Activated T-helper 2 cell treated with anti-CD3 and anti-CD28 coated beads, Interferon-gamma antibody, Interleukin-2, Interleukin-4, amounts not matched to agents 10 μg/mL and 5 μg/mL and 100 μg/mL, durations not matched to agents 14 hours and 24 hours and 36 hours (primary cell): ENCODE measurements at regions of chr13 and their contacts with region 1.

Region 1: GRCh38 chr13:75326173-75327134 is 155.5 kb downstream of the TBC1D4 start:
- DNase-seq: peak; percentile 56
- H3K4me3 Mint-ChIP-seq: peak overlapping the region; percentile 86
- H3K27ac Mint-ChIP-seq: peak overlapping the region; percentile 95
- H3K4me1 Mint-ChIP-seq: peaks cover 54% of the 10 kb centered on the region
- H3K27me3 Mint-ChIP-seq: no peaks in the 10 kb centered on the region

Region 2: DNA sequence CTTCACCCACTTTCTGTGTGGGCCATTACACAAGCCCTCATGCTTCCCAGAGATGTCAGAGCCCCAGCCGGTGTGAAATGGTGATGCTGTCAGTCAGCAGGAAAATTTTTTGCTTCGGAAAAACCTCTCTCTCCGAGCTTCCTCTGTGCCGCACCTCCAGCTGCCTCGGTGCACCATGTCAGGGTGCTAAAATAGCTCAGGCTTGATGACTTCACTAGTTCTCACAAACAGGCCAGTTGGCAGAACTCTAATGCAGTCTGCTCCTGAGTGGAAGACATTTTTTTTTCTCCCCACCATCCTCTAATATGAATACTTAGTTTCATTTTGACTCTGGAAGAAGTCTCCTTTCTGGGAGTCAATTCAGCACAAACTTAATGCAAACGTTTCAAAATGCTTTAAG is 1263.5 kb before region 1 on chr13:
- intact Hi-C with region 1: loop called (anchors 10 kb)
- DNase-seq: no peak
- H3K4me3 Mint-ChIP-seq: peak overlapping the region; percentile 79
- H3K27ac Mint-ChIP-seq: peak overlapping the region; percentile 93
- H3K4me1 Mint-ChIP-seq: peaks cover 64% of the 10 kb centered on the region
- H3K27me3 Mint-ChIP-seq: no peaks in the 10 kb centered on the region

Region 3: GRCh38 chr13:75294110-75294509 is 32.3 kb before region 1 on chr13:
- intact Hi-C with region 1: loop called (anchors 5 kb)
- DNase-seq: no peak
- H3K4me3 Mint-ChIP-seq: no peak overlapping the region
- H3K27ac Mint-ChIP-seq: no peak overlapping the region
- H3K4me1 Mint-ChIP-seq: peaks cover 40% of the 10 kb centered on the region
- H3K27me3 Mint-ChIP-seq: no peaks in the 10 kb centered on the region

Region 4: GRCh38 chr13:75365724-75366173 is 39.3 kb after region 1 on chr13:
- intact Hi-C with region 1: loop called (anchors 1 kb)
- DNase-seq: peak; percentile 22
- H3K4me3 Mint-ChIP-seq: peak overlapping the region; percentile 59
- H3K27ac Mint-ChIP-seq: peak overlapping the region; percentile 95
- H3K4me1 Mint-ChIP-seq: peaks cover 46% of the 10 kb centered on the region
- H3K27me3 Mint-ChIP-seq: no peaks in the 10 kb centered on the region

Region 5: GRCh38 chr13:75549262-75550158 is 223.1 kb after region 1 on chr13 and contains the start of gene UCHL3:
- intact Hi-C with region 1: loop called (anchors 5 kb)
- DNase-seq: peak; percentile 95
- H3K4me3 Mint-ChIP-seq: peak within 1 kb of the TSS; percentile 97
- H3K27ac Mint-ChIP-seq: peak within 1 kb of the TSS; percentile 96
- H3K4me1 Mint-ChIP-seq: peaks cover 19% of the 10 kb centered on the region
- H3K27me3 Mint-ChIP-seq: no peaks in the 10 kb centered on the region
- total RNA-seq, gene UCHL3: 35.4 and 37.9 TPM in 2 replicates

Region 6: DNA sequence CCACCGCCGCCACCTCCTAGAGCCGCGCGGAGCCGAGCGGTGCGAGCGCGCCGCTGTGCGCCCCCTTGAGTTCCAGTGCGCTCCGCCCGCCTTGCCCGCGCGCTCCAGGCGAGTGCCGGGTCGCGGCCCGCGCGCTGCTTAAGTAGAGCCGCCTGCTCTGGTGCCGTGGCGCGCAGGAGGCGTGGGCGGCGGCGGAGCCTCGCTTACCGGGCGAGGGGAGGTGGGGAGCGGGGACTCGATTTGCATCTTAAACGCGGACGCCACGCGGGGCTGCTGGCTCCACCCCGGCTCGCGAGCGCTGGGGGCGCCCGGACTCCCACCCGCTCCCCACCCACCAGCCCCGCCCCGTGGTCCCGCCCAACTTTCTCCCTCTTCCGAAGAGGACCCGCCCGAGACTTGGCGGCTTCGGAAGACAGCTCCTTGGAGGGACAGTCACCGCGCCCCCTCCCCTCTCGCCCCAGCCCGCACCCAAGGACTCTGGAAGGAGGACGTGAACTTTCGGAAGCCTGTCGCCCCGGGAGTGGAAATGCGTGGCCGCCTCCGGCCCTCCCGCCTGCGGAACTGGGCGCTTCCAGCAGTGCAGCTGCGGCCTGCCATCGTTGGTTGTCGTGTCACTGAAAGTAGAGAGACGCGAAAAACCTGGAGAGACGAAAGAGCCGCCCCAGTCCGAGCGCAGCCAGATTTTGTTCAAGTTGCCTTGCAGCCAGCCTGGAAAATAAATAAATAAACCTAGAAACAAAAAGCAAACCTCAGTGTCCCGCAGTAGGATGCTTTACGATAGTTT is 1560.0 kb after region 1 on chr13 and contains the start of gene KCTD12:
- intact Hi-C with region 1: loop called (anchors 5 kb)
- DNase-seq: peak; percentile 75
- H3K4me3 Mint-ChIP-seq: peak within 1 kb of the TSS; percentile 88
- H3K27ac Mint-ChIP-seq: peak within 1 kb of the TSS; percentile 75
- H3K4me1 Mint-ChIP-seq: peaks cover 32% of the 10 kb centered on the region
- H3K27me3 Mint-ChIP-seq: peaks cover 25% of the 10 kb centered on the region
- total RNA-seq, gene KCTD12: 12.7 and 13.2 TPM in 2 replicates